ENCODE measurements at regions of chr15 and their contacts with region 1.

Region 1: DNA sequence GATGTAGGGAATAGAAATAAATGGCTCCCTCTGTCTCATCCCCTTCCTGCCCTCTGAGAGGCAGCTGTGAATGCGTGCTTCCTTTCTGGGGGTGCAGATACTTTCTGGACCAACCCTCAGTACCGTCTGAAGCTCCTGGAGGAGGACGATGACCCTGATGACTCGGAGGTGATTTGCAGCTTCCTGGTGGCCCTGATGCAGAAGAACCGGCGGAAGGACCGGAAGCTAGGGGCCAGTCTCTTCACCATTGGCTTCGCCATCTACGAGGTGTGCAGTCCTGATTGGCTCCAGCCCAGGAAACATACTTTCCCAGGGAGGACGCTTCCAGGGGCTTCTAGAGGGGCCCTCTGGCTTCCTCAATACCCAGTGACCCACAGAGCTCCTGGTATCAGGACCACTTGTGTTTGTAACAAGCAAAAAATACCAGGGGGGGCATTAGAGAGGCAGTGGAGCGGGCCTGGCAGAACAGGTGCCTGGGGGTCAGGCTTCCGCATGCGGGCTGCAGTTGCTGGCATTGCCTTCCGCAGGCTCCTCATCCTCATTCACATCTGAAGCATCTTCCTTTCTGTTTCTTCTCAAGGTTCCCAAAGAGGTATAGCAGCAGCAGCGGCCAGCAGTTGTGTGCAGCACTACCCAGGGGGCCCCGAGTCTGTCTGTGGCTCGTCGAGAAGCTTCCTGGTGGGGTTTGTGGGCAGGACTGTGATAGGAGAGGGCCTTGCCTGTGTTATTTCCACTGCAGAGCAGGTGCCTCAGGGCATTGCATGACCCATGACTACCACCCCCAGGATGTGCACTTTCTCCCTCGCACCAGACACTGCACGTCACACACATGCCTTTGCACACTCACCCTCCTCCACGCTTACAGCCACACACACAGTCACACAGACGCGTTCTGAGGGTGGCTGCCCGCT is 42.5 kb downstream of the CAPN3 start:
- DNase-seq: no peak
- H3K4me3 ChIP-seq: no peak overlapping the region
- H3K27ac ChIP-seq: peak overlapping the region in 50 of 59 donors; percentile 19 to 100 (median 96)
- H3K27me3 ChIP-seq: no peaks in the 10 kb centered on the region
- CTCF ChIP-seq: no peak

Region 2: DNA sequence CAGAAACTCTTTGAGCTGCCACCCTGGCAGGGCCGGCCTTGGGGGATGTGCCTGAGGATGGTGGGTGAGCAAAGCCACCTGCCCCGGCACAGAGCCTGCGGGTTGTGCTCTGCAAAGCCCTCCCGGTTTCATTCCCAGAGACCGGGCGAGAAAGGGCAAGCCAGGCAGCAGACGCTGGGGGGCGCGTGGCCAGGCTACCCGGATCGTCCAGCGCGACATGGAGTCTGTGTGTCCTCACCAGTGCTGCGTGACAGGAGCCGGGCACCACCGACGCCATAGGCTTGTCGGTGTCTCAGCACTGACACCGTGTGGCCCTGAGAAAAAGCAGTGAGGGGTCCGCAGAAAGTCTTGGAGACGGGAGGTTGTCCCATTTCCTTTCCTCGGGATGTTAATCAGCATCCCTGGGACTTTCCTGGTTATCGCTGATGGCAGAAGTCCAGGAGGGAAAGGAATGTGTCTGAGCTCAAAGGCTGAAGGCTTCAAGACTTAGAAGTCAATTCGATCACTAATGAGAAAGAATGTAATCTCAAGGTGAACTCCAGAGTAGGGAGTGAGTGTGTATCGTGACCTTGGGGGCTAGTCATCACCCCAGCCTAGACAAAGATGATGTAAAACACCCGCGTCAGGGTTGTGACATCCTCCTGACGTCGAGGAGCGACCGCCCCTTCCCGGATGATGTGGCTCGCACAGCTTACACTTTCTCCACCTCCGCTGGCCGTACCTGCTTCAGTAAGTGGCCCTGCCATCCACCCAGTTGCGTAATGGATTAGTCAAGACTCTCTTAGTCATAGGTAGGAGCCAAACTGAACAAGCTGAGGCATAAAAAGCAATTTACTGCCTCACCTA is 344.6 kb before region 1 on chr15:
- intact Hi-C with region 1: loop called in 1 of 2 experiments (anchors 10 kb)
- DNase-seq: peak; percentile 58 to 81 (median 73)
- H3K4me3 ChIP-seq: peak overlapping the region in 57 of 59 donors; percentile 2 to 60 (median 42)
- H3K27ac ChIP-seq: no peak overlapping the region
- H3K27me3 ChIP-seq: no peaks in the 10 kb centered on the region
- CTCF ChIP-seq: peak in 55 of 56 donors; percentile 38 to 81 (median 64)

Region 3: GRCh38 chr15:42474827-42475226 is 73.0 kb after region 1 on chr15:
- intact Hi-C with region 1: loop called in 1 of 2 experiments (anchors 5 kb)
- DNase-seq: no peak
- H3K4me3 ChIP-seq: no peak overlapping the region
- H3K27ac ChIP-seq: peak overlapping the region in 12 of 59 donors; percentile 1 to 52 (median 14)
- H3K27me3 ChIP-seq: no peaks in the 10 kb centered on the region
- CTCF ChIP-seq: no peak